ENCODE measurements at regions of chr12 and their contacts with region 1.

Region 1: GRCh38 chr12:123062681-123063486 is 82.4 kb downstream of the ARL6IP4 start:
- DNase-seq: no peak
- ATAC-seq: no peak
- H3K4me3 Mint-ChIP-seq: no peak overlapping the region
- H3K27ac Mint-ChIP-seq: no peak overlapping the region
- H3K4me1 Mint-ChIP-seq: 0 out of 2 replicates have a peak, but pooled peaks cover 2% of the 10 kb centered on the region
- H3K27me3 Mint-ChIP-seq: no peaks in the 10 kb centered on the region
- CTCF ChIP-seq: no peak

Region 2: DNA sequence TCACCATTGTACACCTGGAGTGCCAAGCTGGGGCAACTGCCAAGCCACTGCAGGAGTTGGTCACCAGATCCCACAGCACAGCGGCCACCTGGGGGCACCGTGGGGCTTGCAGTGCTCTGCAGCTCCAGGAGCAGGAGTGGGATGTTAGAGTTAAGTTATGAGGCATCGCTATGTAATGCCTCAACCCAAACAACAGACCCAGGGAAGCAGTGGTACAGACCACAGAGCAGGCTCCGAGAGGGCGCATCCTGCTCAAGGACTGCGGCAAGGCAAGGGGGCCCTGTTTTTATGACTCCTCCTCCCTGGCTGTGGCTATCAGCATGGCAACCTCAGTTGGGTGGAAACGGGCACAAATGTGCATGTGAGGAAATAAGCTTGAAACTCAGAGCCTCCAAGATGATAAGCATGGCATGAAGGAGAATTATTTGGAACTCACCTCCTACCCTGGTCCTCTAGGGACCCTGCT is 19.3 kb before region 1 on chr12:
- CTCF ChIA-PET with region 1: interaction called, 25 read pairs
- POLR2A ChIA-PET with region 1: no interaction called
- DNase-seq: peak; percentile 74
- ATAC-seq: peak; percentile 91
- H3K4me3 Mint-ChIP-seq: no peak overlapping the region
- H3K27ac Mint-ChIP-seq: no peak overlapping the region
- H3K4me1 Mint-ChIP-seq: no peaks in the 10 kb centered on the region
- H3K27me3 Mint-ChIP-seq: no peaks in the 10 kb centered on the region; the same call in 1 of the 2 replicates
- CTCF ChIP-seq: no peak

Region 3: DNA sequence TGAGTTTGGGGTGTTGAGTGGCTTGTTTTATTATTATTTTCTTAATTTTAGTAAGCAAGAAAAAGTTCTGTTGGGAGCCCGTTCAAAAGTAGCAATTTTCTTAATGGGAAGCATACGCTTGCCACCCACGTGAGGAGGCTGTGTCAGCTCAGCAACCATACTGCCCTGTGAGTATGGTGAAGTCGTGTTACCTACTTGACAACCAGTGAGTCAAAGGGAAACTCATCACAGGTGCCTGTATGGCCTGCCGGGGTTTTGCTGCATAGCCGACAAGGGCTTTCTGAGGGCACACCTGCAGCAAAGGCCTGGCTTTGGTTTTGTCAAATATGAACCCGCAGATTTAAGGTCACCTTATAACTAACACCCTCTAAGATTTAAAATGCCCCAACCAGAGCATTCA is 56.9 kb after region 1 on chr12:
- CTCF ChIA-PET with region 1: interaction called, 10 read pairs
- POLR2A ChIA-PET with region 1: no interaction called
- DNase-seq: no peak
- ATAC-seq: no peak
- H3K4me3 Mint-ChIP-seq: no peak overlapping the region
- H3K27ac Mint-ChIP-seq: no peak overlapping the region
- H3K4me1 Mint-ChIP-seq: 0 out of 2 replicates have a peak, but pooled peaks cover 5% of the 10 kb centered on the region
- H3K27me3 Mint-ChIP-seq: no peaks in the 10 kb centered on the region
- CTCF ChIP-seq: no peak

Region 4: DNA sequence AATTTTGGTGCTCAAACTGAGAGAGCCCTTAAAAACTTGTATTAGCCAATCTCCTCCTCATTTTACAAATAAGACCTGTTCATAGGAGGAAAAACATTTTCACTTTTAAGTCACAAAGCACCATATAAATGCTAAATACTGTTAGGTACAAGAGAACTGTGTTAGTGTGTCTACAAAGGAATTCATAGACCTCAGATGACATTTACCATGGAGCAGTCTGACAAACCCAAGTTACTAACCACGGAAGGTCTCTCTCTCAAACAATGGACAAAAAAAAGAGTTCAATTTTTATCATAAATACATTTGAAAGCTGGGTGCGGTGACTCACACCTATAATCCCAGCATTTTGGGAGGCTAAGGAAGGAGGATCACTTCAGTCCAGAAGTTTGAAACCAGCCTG is 291.7 kb after region 1 on chr12:
- CTCF ChIA-PET with region 1: no interaction called
- POLR2A ChIA-PET with region 1: no interaction called
- DNase-seq: no peak
- ATAC-seq: no peak
- H3K4me3 Mint-ChIP-seq: no peak overlapping the region
- H3K27ac Mint-ChIP-seq: no peak overlapping the region
- H3K4me1 Mint-ChIP-seq: peaks cover 10% of the 10 kb centered on the region
- H3K27me3 Mint-ChIP-seq: no peaks in the 10 kb centered on the region
- CTCF ChIP-seq: no peak

Measured in WTC11 (cell line).